MCF 10A (cell line): ENCODE measurements at regions of chr11 and their contacts with region 1.

Region 1: DNA sequence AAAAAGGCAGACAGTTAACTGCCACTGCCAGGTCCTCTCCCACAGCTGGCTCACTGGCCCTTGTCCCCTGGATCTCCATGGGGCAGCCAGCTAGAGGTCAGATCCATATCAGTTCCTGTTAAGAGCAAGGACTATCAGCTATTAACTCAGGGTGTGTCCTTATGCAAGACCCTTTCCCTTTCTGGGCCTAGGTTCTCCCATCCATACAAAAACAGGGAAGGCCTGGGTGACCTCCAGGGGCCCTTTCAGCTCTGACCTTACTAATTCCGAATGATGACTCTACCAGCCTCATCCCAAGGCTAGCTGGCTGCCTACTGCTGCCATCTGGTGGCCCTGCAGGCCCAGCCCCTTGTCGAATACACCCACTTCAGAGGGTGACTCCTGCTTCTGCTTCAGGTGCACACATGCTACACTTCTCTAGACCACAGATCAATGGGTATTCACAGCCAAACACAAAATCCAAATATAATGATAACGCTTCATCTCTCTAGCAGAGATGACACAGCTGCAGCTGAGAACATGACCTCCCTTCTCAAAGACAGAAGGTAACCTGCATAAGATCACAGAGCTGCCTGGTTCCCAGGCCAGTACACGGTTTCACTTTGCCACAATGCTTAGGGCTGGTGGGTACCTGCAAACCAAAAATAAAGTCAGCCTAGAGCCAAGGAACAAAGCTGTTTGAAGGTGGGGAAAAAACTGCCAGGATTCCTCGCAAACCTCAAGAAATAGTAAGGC is 34.1 kb downstream of the SERGEF start:
- DNase-seq: peak; percentile 57
- H3K4me3 Mint-ChIP-seq: no peak overlapping the region
- H3K27ac Mint-ChIP-seq: no peak overlapping the region
- H3K4me1 Mint-ChIP-seq: no peaks in the 10 kb centered on the region
- H3K27me3 Mint-ChIP-seq: no peaks in the 10 kb centered on the region
- CTCF ChIP-seq: peak; percentile 75

Region 2: GRCh38 chr11:17598700-17599459 is 379.8 kb before region 1 on chr11:
- CTCF ChIA-PET with region 1: interaction called, 47 read pairs
- POLR2A ChIA-PET with region 1: interaction called, 3 read pairs
- intact Hi-C with region 1: loop called (anchors 1 kb)
- DNase-seq: peak; percentile 62
- H3K4me3 Mint-ChIP-seq: no peak overlapping the region
- H3K27ac Mint-ChIP-seq: no peak overlapping the region
- H3K4me1 Mint-ChIP-seq: no peaks in the 10 kb centered on the region
- H3K27me3 Mint-ChIP-seq: peaks cover 21% of the 10 kb centered on the region
- CTCF ChIP-seq: peak; percentile 89

Region 3: GRCh38 chr11:17760102-17761029 is 218.4 kb before region 1 on chr11:
- CTCF ChIA-PET with region 1: interaction called, 28 read pairs
- POLR2A ChIA-PET with region 1: no interaction called
- intact Hi-C with region 1: loop called (anchors 1 kb)
- DNase-seq: peak; percentile 62
- H3K4me3 Mint-ChIP-seq: no peak overlapping the region
- H3K27ac Mint-ChIP-seq: no peak overlapping the region
- H3K4me1 Mint-ChIP-seq: no peaks in the 10 kb centered on the region
- H3K27me3 Mint-ChIP-seq: peaks cover 40% of the 10 kb centered on the region
- CTCF ChIP-seq: peak; percentile 41

Region 4: DNA sequence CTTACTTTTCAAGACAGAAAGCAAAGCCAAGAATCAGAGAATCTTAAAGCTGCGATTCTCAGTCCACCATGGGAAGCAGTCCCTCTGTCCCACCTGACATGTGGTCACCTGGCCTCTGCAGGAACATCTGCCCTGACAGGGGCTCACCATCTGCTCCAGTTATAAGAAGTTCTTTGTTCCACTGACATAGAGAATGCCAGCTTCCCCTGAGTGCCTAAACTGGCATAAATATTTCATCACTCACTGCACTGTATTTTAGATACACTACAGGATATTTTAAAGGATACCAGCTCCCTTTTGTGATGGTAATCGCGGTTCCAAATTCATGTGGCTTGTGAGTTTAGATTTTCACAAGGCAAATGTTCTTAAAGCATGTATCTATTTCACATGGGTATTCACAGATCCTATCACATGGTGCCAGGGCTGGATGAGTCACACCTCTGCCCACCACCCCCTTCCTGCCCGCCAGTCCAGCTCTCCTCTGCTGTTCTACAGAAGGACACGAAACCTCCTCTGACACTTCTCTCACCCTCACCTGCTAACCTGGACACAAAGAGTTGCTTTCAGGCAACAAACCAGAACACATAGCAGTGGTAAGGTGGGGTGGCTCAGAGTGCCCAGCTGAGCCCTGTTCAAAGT is 138.6 kb before region 1 on chr11:
- CTCF ChIA-PET with region 1: interaction called, 10 read pairs
- POLR2A ChIA-PET with region 1: no interaction called
- intact Hi-C with region 1: loop called (anchors 5 kb)
- DNase-seq: peak; percentile 65
- H3K4me3 Mint-ChIP-seq: no peak overlapping the region
- H3K27ac Mint-ChIP-seq: peak overlapping the region; percentile 2
- H3K4me1 Mint-ChIP-seq: peaks cover 11% of the 10 kb centered on the region
- H3K27me3 Mint-ChIP-seq: no peaks in the 10 kb centered on the region
- CTCF ChIP-seq: no peak

Region 5: DNA sequence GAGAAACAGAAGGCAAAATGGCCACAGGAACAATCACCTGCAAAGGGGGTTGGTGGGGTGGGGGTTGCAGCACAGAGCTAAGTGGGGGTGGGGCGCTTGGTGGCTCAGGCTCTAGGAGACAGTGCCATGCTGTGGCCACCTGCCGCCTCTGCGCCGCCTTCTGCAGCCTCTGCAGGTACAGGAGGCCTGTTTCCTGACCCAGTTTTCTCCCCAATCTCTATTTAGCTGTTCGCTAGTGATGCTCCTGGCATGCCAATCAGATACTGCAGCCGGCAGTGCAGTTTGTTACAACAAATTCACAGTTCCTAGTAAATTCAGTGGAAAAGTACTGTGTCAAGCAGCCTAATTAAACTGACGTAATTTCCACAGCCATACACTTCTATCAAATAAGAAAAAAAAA is 72.3 kb before region 1 on chr11:
- CTCF ChIA-PET with region 1: interaction called, 12 read pairs
- POLR2A ChIA-PET with region 1: no interaction called
- intact Hi-C with region 1: no loop called
- DNase-seq: peak; percentile 17
- H3K4me3 Mint-ChIP-seq: no peak overlapping the region
- H3K27ac Mint-ChIP-seq: no peak overlapping the region
- H3K4me1 Mint-ChIP-seq: no peaks in the 10 kb centered on the region
- H3K27me3 Mint-ChIP-seq: no peaks in the 10 kb centered on the region
- CTCF ChIP-seq: peak; percentile 14

Region 6: DNA sequence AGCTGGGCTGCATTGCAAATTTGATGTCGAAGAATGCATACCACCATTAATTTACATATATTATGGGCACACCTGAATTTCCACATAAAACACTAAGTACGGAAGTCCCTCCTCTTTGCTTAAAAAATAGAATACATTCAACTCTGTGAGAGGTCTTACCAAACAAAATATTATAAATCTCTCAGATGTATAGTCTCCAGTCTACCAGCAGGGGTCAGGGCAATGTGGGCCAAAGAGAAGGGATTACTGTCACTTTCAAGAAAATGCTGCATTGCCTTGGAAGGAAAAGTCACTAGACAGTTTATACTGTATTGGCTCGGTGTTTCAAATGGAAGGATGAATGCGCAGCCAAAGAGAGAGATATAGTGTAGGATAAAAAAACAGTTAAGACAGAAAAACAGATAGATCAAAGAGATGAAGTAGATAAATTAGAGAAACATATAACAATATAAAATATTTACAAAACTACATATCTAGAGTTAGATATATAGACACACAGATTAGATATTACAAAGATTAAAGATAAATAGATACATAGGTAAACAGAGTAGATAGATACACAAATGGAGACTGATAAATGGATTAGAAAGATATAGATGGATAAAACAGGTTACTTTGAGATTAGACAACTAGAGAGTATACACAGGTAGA is 13.2 kb after region 1 on chr11:
- CTCF ChIA-PET with region 1: interaction called, 74 read pairs
- POLR2A ChIA-PET with region 1: interaction called, 3 read pairs
- intact Hi-C with region 1: no loop called
- DNase-seq: peak; percentile 73
- H3K4me3 Mint-ChIP-seq: no peak overlapping the region
- H3K27ac Mint-ChIP-seq: no peak overlapping the region
- H3K4me1 Mint-ChIP-seq: peaks cover 17% of the 10 kb centered on the region
- H3K27me3 Mint-ChIP-seq: no peaks in the 10 kb centered on the region
- CTCF ChIP-seq: peak; percentile 67

Region 7: GRCh38 chr11:18485913-18486528 is 507.3 kb after region 1 on chr11:
- CTCF ChIA-PET with region 1: no interaction called
- POLR2A ChIA-PET with region 1: no interaction called
- intact Hi-C with region 1: no loop called
- DNase-seq: no peak
- H3K4me3 Mint-ChIP-seq: no peak overlapping the region
- H3K27ac Mint-ChIP-seq: no peak overlapping the region
- H3K4me1 Mint-ChIP-seq: no peaks in the 10 kb centered on the region
- H3K27me3 Mint-ChIP-seq: no peaks in the 10 kb centered on the region
- CTCF ChIP-seq: no peak